CD4-positive, alpha-beta memory T cell (primary cell): ENCODE measurements at regions of chr5 and their contacts with region 1.

Region 1: DNA sequence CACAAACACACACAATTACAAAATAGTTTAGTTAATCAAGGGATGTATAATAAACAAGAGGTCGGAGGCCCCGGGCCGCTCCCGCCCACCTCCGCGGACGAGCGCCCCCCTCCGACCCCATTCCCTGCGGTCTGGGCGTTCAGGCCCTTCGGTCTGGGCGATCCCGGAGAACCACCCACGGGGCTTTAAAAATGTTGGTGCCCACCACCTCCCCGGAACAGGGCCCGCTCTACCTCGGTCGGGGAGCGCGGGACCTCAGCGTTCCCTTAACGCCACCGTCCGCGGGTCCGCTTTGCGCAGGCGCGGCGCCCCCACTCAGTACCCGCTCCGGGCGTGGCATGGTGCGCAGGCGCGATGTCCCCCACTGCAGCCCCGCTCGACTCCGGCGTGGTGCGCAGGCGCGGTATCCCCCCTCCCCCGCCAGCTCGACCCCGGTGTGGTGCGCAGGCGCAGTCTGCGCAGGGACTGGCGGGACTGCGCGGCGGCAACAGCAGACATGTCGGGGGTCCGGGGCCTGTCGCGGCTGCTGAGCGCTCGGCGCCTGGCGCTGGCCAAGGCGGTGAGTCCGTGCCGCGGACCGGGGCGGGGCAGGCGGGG is at the starts of genes CCDC127 and SDHA:
- DNase-seq: peak; percentile 94 to 99 (median 96)
- H3K4me3 ChIP-seq: peak within 1 kb of the TSS; percentile 73 to 77
- H3K4me3 Mint-ChIP-seq: peak within 1 kb of the TSS; percentile 93 to 98 (median 95)
- H3K27ac ChIP-seq: peak within 1 kb of the TSS; percentile 88
- H3K27ac Mint-ChIP-seq: peak within 1 kb of the TSS; percentile 91 to 98 (median 97)
- H3K4me1 ChIP-seq: peaks cover 56% of the 10 kb centered on the region
- H3K4me1 Mint-ChIP-seq: peaks cover 34 to 73% (median 51%) of the 10 kb centered on the region in 4 donors
- H3K27me3 ChIP-seq: no peaks in the 10 kb centered on the region
- H3K27me3 Mint-ChIP-seq: no peaks in the 10 kb centered on the region
- total RNA-seq, gene CCDC127: 6.7 to 7.7 TPM
- total RNA-seq, gene SDHA: 131 to 136 TPM

Region 2: GRCh38 chr5:188488-189481 is 29.2 kb before region 1 on chr5:
- CTCF ChIA-PET with region 1: interaction called, 7 read pairs
- POLR2A ChIA-PET with region 1: interaction called, 18 read pairs
- intact Hi-C with region 1: loop called (anchors 1 kb)
- DNase-seq: peak; percentile 80 to 83 (median 82)
- H3K4me3 ChIP-seq: no peak overlapping the region
- H3K4me3 Mint-ChIP-seq: peak overlapping the region in 4 of 8 donors; percentile 8 to 62 (median 44)
- H3K27ac ChIP-seq: no peak overlapping the region
- H3K27ac Mint-ChIP-seq: peak overlapping the region in 6 of 7 donors; percentile 12 to 66 (median 34)
- H3K4me1 ChIP-seq: peaks cover 10% of the 10 kb centered on the region
- H3K4me1 Mint-ChIP-seq: peaks cover 4 to 11% (median 7%) of the 10 kb centered on the region in 4 donors
- H3K27me3 ChIP-seq: peaks cover 6% of the 10 kb centered on the region
- H3K27me3 Mint-ChIP-seq: peaks cover 8 to 15% of the 10 kb centered on the region in 2 donors

Region 3: DNA sequence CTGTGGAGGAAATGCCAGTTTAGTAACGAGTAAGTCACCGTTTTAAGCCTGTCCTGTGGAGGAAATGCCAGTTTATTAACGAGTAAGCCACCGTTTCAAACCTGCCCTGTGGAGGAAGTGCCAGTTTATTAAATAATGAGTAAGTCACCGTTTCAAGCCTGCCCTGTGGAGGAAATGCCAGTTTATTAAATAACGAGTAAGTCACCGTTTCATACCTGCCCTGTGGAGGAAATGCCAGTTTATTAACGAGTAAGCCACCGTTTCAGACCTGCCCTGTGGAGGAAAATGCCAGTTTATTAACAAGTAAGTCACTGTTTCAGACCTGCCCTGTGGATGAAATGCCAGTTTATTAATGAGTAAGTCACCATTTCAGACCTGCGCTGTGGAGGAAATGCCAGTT is 34.6 kb after region 1 on chr5:
- CTCF ChIA-PET with region 1: no interaction called
- POLR2A ChIA-PET with region 1: interaction called, 3 read pairs
- intact Hi-C with region 1: loop called (anchors 5 kb)
- DNase-seq: no peak
- H3K4me3 ChIP-seq: no peak overlapping the region
- H3K4me3 Mint-ChIP-seq: peak overlapping the region; percentile 52 to 81 (median 62)
- H3K27ac ChIP-seq: peak overlapping the region; percentile 42
- H3K27ac Mint-ChIP-seq: peak overlapping the region; percentile 73 to 92 (median 88)
- H3K4me1 ChIP-seq: peaks cover 12% of the 10 kb centered on the region
- H3K4me1 Mint-ChIP-seq: peaks cover 9 to 26% (median 19%) of the 10 kb centered on the region in 4 donors
- H3K27me3 ChIP-seq: no peaks in the 10 kb centered on the region
- H3K27me3 Mint-ChIP-seq: no peaks in the 10 kb centered on the region

Region 4: GRCh38 chr5:270340-270739 is 52.4 kb after region 1 on chr5:
- CTCF ChIA-PET with region 1: no interaction called
- POLR2A ChIA-PET with region 1: interaction called, 42 read pairs
- intact Hi-C with region 1: loop called (anchors 1 kb)
- DNase-seq: no peak
- H3K4me3 ChIP-seq: no peak overlapping the region
- H3K4me3 Mint-ChIP-seq: peak overlapping the region; percentile 65 to 97 (median 85)
- H3K27ac ChIP-seq: no peak overlapping the region
- H3K27ac Mint-ChIP-seq: peak overlapping the region; percentile 65 to 91 (median 83)
- H3K4me1 ChIP-seq: peaks cover 35% of the 10 kb centered on the region
- H3K4me1 Mint-ChIP-seq: peaks cover 17 to 45% (median 36%) of the 10 kb centered on the region in 4 donors
- H3K27me3 ChIP-seq: no peaks in the 10 kb centered on the region
- H3K27me3 Mint-ChIP-seq: no peaks in the 10 kb centered on the region

Region 5: GRCh38 chr5:442335-443238 is 224.6 kb after region 1 on chr5 and contains the start of gene EXOC3:
- CTCF ChIA-PET with region 1: interaction called, 3 read pairs
- POLR2A ChIA-PET with region 1: interaction called, 4 read pairs
- intact Hi-C with region 1: loop called (anchors 10 kb)
- DNase-seq: peak; percentile 62 to 77 (median 69)
- H3K4me3 ChIP-seq: peak within 1 kb of the TSS; percentile 92 to 95
- H3K4me3 Mint-ChIP-seq: peak within 1 kb of the TSS; percentile 94 to 99 (median 96)
- H3K27ac ChIP-seq: peak within 1 kb of the TSS; percentile 77
- H3K27ac Mint-ChIP-seq: peak within 1 kb of the TSS; percentile 91 to 97 (median 95)
- H3K4me1 ChIP-seq: peaks cover 34% of the 10 kb centered on the region
- H3K4me1 Mint-ChIP-seq: peaks cover 17 to 42% (median 34%) of the 10 kb centered on the region in 4 donors
- H3K27me3 ChIP-seq: no peaks in the 10 kb centered on the region
- H3K27me3 Mint-ChIP-seq: no peaks in the 10 kb centered on the region
- total RNA-seq, gene EXOC3: 83.0 to 96.1 TPM

Region 6: DNA sequence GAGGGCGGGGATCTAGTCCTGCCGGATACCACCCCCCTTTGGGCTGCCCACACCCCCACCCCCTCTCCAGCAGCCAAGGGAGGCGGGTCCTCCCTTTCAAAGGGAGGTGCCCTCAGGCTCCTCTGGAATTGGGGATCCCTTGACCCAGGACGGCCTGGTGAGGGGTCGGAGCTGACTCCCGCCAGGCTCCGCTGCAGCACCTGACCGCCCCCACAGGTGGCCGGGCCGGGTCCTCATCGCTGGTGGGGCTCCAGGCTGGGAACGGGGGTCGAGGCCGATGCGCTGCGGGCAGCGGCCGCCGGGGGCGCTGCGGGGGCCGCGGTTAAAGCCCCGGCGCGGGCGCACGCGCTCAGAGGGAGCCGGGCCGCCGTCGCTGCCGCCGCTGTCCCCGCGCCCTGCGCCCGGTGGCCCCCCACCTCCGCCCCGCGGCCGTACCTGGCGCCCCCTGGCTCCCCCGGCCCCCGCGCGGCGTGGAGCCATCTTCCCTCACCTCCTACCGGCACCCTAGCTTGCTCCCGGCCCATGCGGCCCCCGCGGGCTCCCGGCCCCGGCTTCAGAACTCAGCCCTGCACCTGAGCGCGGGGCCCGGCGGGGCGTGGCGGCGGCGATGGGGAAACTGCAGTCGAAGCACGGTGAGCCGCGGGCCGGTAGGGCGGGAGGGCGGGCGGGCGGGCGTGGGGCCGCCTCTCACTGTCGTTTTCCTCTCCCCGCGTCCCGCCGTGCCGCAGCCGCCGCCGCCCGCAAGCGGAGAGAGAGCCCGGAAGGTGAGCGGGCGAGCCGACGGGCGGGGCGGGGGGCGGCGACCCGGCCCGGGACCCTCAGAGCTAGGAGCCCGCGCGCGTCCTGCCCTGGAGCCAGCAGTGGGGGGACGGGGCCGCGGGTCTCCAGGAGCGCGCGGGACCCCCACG is 790.7 kb after region 1 on chr5 and contains the start of gene NKD2:
- CTCF ChIA-PET with region 1: no interaction called
- POLR2A ChIA-PET with region 1: no interaction called
- intact Hi-C with region 1: no loop called
- DNase-seq: peak; percentile 32 to 48 (median 41)
- H3K4me3 ChIP-seq: no peak within 1 kb of the TSS
- H3K4me3 Mint-ChIP-seq: peak within 1 kb of the TSS in 6 of 8 donors; percentile 52 to 85 (median 75)
- H3K27ac ChIP-seq: no peak within 1 kb of the TSS
- H3K27ac Mint-ChIP-seq: peak within 1 kb of the TSS in 1 of 7 donors; percentile 25
- H3K4me1 ChIP-seq: peaks cover 21% of the 10 kb centered on the region
- H3K4me1 Mint-ChIP-seq: peaks cover 5 to 39% (median 18%) of the 10 kb centered on the region in 4 donors
- H3K27me3 ChIP-seq: peaks cover 29% of the 10 kb centered on the region
- H3K27me3 Mint-ChIP-seq: peaks cover 25 to 40% of the 10 kb centered on the region in 2 donors
- total RNA-seq, gene NKD2: not detected